CD4-positive, alpha-beta memory T cell (primary cell): ENCODE measurements at regions of chr6 and their contacts with region 1.

Region 1: DNA sequence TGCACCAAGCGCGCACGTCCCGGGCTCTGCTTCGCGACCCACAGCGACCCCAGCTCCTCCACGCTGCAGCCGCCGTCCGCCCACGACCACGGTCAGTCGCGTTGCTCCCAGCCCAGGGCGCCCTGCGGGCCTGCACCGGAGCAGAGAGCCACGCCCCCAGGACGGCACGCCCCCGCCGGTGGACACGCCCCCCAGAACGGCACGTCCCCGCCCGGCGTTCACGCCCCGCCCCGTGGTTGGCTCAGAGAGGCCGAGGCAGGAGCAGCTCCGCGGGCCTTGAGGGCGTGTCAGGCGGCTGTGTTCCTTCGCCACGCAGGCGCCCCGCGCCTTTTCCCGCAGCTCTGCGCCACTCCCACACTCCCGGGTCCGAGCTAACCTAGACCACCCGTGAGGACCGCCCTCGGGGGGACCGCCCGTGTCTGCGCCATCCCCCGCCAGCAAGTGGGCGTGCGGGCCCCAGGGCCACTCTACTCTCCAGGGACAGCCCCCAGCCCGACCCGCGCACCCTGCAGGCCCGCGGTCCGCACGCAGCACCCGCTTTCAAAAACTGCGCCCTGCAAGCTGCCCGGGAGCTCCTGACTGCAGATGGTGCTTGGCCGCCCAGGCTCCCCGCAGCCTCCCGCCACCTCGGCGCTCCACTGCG is at the start of gene RNASET2:
- DNase-seq: peak; percentile 96 to 100 (median 97)
- H3K4me3 ChIP-seq: peak within 1 kb of the TSS; percentile 68 to 95
- H3K4me3 Mint-ChIP-seq: peak within 1 kb of the TSS; percentile 91 to 100 (median 97)
- H3K27ac ChIP-seq: peak within 1 kb of the TSS; percentile 92
- H3K27ac Mint-ChIP-seq: peak within 1 kb of the TSS; percentile 94 to 100 (median 98)
- H3K4me1 ChIP-seq: peaks cover 67% of the 10 kb centered on the region
- H3K4me1 Mint-ChIP-seq: peaks cover 57 to 79% (median 67%) of the 10 kb centered on the region in 4 donors
- H3K27me3 ChIP-seq: no peaks in the 10 kb centered on the region
- H3K27me3 Mint-ChIP-seq: no peaks in the 10 kb centered on the region
- total RNA-seq, gene RNASET2: 296 to 306 TPM

Region 2: DNA sequence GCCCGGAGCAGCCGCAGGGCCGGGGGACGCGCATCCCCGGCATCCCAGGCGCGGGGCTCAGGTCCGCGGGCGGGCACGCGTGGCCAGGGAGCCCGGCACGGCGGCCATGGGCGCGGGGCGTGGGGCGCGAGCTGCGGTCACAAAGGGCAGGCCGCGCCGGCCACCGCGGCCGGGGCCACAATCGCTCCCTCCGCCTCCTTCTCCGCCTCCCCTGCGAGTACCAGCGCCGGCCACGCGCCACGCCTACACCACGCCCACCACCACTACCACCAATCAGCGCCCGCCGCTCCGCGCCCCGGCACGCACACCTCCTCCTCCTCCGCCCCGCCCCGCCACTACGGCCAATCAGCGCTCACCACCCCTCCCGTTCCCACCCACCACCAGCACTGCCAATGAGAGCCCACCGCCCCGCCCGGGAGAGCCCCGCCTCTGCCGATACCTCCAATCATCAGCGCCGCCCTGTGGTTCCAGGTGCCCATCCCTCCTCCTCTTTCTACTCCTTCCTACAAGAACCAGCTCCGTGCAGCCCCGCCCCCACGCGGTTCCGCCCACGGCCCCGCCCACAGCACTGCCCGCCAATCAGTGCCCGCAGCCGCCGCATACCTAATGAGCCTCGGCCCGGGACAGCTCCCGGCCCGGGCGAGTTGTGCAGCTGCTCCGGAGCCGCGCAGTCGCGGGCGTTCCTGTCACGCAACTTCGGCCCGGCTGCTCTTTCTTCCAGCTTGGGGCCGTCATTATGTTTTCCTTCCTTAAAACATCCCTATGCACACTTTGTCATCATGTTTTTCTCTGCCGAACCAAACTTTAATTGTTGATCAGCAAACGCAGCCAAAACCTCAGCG is 329.3 kb before region 1 on chr6 and contains the start of gene RPS6KA2:
- CTCF ChIA-PET with region 1: no interaction called
- POLR2A ChIA-PET with region 1: interaction called, 3 read pairs
- intact Hi-C with region 1: loop called (anchors 2 kb)
- DNase-seq: peak; percentile 100
- H3K4me3 ChIP-seq: peak within 1 kb of the TSS; percentile 71 to 76
- H3K4me3 Mint-ChIP-seq: peak within 1 kb of the TSS; percentile 87 to 97 (median 90)
- H3K27ac ChIP-seq: peak within 1 kb of the TSS; percentile 25
- H3K27ac Mint-ChIP-seq: peak within 1 kb of the TSS; percentile 89 to 97 (median 95)
- H3K4me1 ChIP-seq: peaks cover 20% of the 10 kb centered on the region
- H3K4me1 Mint-ChIP-seq: peaks cover 12 to 25% (median 15%) of the 10 kb centered on the region in 4 donors
- H3K27me3 ChIP-seq: peaks cover 8% of the 10 kb centered on the region
- H3K27me3 Mint-ChIP-seq: peaks cover 21 to 39% of the 10 kb centered on the region in 2 donors
- total RNA-seq, gene RPS6KA2: 9.7 to 10.6 TPM

Region 3: DNA sequence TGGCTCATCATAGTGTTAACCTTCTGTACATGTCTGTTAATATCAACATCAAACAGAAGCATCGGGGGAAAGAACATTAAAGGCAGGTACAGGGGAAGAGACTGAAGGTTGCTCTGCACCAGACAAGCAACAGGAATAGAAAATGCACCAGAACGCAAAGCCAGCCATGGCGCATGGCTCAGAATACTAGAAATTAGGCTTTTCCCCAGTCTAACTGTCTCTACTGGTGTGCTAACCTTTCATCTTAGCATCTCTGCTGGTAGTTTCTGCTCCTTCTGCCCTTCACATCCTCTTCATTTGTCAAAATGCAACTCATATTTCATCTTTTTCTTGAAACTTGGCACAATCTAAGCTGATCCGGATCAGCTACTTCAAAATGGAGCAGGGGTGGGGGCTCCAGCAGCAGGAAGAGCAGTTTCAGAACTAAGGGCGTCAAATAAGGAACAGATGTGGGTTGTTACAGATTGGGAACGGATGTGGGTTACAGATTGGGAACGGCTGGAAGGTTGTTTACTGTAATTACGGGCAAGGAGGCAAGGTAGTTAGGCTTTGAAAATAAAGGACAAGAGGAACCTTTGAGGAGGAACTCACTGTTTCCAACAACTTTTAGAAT is 12.9 kb after region 1 on chr6:
- CTCF ChIA-PET with region 1: interaction called, 12 read pairs
- POLR2A ChIA-PET with region 1: interaction called, 263 read pairs
- intact Hi-C with region 1: no loop called
- DNase-seq: peak in 3 of 5 donors; percentile 19 to 47 (median 42)
- H3K4me3 ChIP-seq: no peak overlapping the region
- H3K4me3 Mint-ChIP-seq: peak overlapping the region; percentile 12 to 75 (median 69)
- H3K27ac ChIP-seq: peak overlapping the region; percentile 7
- H3K27ac Mint-ChIP-seq: peak overlapping the region; percentile 59 to 97 (median 87)
- H3K4me1 ChIP-seq: peaks cover 27% of the 10 kb centered on the region
- H3K4me1 Mint-ChIP-seq: peaks cover 13 to 40% (median 23%) of the 10 kb centered on the region in 4 donors
- H3K27me3 ChIP-seq: no peaks in the 10 kb centered on the region
- H3K27me3 Mint-ChIP-seq: no peaks in the 10 kb centered on the region

Region 4: DNA sequence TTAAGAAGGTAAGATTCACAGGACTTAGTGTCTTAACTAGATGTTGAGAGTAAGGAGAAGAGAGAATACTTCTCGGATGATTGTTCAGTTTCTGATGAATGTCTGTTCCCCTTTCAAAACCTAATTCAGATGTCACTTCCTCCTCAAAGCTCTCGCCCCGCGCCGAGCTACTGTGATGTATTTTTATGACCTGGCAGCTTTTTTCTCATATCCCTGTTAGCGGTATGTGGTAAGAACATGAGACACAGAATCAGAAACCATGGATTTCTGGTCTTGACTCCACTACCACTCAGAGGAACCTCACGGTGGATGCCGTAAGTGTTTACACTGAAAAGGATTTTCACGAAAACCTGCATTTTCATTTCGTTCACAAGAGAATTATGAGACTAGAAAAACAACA is 91.0 kb after region 1 on chr6:
- CTCF ChIA-PET with region 1: no interaction called
- POLR2A ChIA-PET with region 1: interaction called, 13 read pairs
- intact Hi-C with region 1: loop called (anchors 5 kb)
- DNase-seq: peak; percentile 49 to 67 (median 64)
- H3K4me3 ChIP-seq: peak overlapping the region in 1 of 2 donors; percentile 28
- H3K4me3 Mint-ChIP-seq: peak overlapping the region; percentile 56 to 82 (median 71)
- H3K27ac ChIP-seq: peak overlapping the region; percentile 30
- H3K27ac Mint-ChIP-seq: peak overlapping the region; percentile 64 to 97 (median 85)
- H3K4me1 ChIP-seq: peaks cover 49% of the 10 kb centered on the region
- H3K4me1 Mint-ChIP-seq: peaks cover 26 to 57% (median 39%) of the 10 kb centered on the region in 4 donors
- H3K27me3 ChIP-seq: no peaks in the 10 kb centered on the region
- H3K27me3 Mint-ChIP-seq: no peaks in the 10 kb centered on the region

Region 5: GRCh38 chr6:167350731-167351655 is 394.4 kb after region 1 on chr6:
- CTCF ChIA-PET with region 1: no interaction called
- POLR2A ChIA-PET with region 1: interaction called, 8 read pairs
- intact Hi-C with region 1: loop called (anchors 10 kb)
- DNase-seq: peak; percentile 79 to 87 (median 82)
- H3K4me3 ChIP-seq: peak overlapping the region; percentile 36 to 72
- H3K4me3 Mint-ChIP-seq: peak overlapping the region; percentile 80 to 96 (median 92)
- H3K27ac ChIP-seq: no peak overlapping the region
- H3K27ac Mint-ChIP-seq: peak overlapping the region; percentile 23 to 93 (median 88)
- H3K4me1 ChIP-seq: peaks cover 17% of the 10 kb centered on the region
- H3K4me1 Mint-ChIP-seq: peaks cover 12 to 25% (median 17%) of the 10 kb centered on the region in 4 donors
- H3K27me3 ChIP-seq: no peaks in the 10 kb centered on the region
- H3K27me3 Mint-ChIP-seq: peaks cover 0 to 3% of the 10 kb centered on the region in 2 donors